Mammary epithelial cell (primary cell): ENCODE measurements at regions of chr16 and their contacts with region 1.

Region 1: GRCh38 chr16:30005341-30006094 is 5.3 kb downstream of the DOC2A start:
- DNase-seq: no peak
- H3K4me3 ChIP-seq: no peak overlapping the region
- H3K27ac ChIP-seq: no peak overlapping the region
- H3K4me1 ChIP-seq: peaks cover 2% of the 10 kb centered on the region
- H3K27me3 ChIP-seq: peaks cover 6% of the 10 kb centered on the region
- CTCF ChIP-seq: peak; percentile 71 to 76

Region 2: GRCh38 chr16:29862884-29863668 is 142.4 kb before region 1 on chr16 and contains the start of gene CDIPT:
- CTCF ChIA-PET with region 1: no interaction called
- dilution Hi-C with region 1: no loop called
- in situ Hi-C with region 1: no loop called
- intact Hi-C with region 1: loop called (anchors 2 kb)
- DNase-seq: peak; percentile 92
- H3K4me3 ChIP-seq: peak within 1 kb of the TSS; percentile 83 to 97 (median 89)
- H3K27ac ChIP-seq: peak within 1 kb of the TSS; percentile 98
- H3K4me1 ChIP-seq: peaks cover 3% of the 10 kb centered on the region
- H3K27me3 ChIP-seq: no peaks in the 10 kb centered on the region
- CTCF ChIP-seq: peak; percentile 58 to 72
- total RNA-seq, gene CDIPT: 47.8 to 72.2 TPM

Region 3: DNA sequence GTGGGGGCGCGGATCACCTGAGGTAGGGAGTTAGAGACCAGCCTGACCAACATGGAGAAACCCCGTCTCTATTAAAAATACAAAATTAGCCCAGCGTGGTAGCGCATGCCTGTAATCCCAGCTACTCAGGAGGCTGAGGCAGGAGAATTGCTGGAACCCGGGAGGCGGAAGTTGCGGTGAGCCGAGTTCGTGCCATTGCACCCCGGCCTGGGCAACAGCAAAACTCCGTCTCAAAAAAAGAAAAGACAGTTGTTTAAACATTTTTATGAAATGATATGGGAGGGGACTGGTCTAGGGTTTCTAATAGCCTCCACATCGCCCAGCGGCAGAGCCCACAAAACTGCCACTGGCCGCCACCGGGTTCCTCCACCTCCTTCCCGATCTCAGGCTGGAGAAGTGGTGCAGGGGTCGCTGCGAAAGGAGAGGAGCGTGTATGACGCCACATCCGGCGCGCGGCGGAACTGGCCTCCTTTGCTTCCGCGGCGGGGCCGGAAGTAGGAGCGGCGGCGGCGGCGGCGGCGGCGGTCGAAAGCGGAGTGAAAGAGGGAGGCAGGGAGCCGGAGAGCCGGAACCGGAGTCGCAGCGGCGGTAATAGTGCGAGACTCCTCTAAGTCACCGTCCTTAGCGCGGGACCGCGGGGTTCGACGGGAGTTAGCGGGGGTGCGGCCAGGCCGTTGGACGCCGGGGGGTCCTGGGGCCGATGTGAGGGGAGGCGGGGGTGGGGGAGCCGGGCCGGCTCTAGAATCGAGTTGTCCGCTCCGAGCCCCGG is 70.2 kb after region 1 on chr16 and contains the start of gene PPP4C:
- CTCF ChIA-PET with region 1: no interaction called
- dilution Hi-C with region 1: loop called (anchors 5 kb)
- in situ Hi-C with region 1: no loop called
- intact Hi-C with region 1: no loop called
- DNase-seq: peak; percentile 85
- H3K4me3 ChIP-seq: peak within 1 kb of the TSS; percentile 78 to 99 (median 89)
- H3K27ac ChIP-seq: peak within 1 kb of the TSS; percentile 80
- H3K4me1 ChIP-seq: peaks cover 14% of the 10 kb centered on the region
- H3K27me3 ChIP-seq: no peaks in the 10 kb centered on the region
- CTCF ChIP-seq: no peak
- total RNA-seq, gene PPP4C: 125 to 221 TPM

Region 4: GRCh38 chr16:30122604-30123160 is 117.2 kb after region 1 on chr16:
- CTCF ChIA-PET with region 1: no interaction called
- dilution Hi-C with region 1: no loop called
- in situ Hi-C with region 1: no loop called
- intact Hi-C with region 1: no loop called
- DNase-seq: no peak
- H3K4me3 ChIP-seq: peak overlapping the region; percentile 71 to 88 (median 76)
- H3K27ac ChIP-seq: no peak overlapping the region
- H3K4me1 ChIP-seq: peaks cover 8% of the 10 kb centered on the region
- H3K27me3 ChIP-seq: no peaks in the 10 kb centered on the region
- CTCF ChIP-seq: no peak